Activated T-helper 2 cell treated with anti-CD3 and anti-CD28 coated beads, Interferon-gamma antibody, Interleukin-2, Interleukin-4, amounts not matched to agents 10 μg/mL and 5 μg/mL and 100 μg/mL, durations not matched to agents 14 hours and 24 hours and 36 hours (primary cell): ENCODE measurements at regions of chr12 and their contacts with region 1.

Region 1: DNA sequence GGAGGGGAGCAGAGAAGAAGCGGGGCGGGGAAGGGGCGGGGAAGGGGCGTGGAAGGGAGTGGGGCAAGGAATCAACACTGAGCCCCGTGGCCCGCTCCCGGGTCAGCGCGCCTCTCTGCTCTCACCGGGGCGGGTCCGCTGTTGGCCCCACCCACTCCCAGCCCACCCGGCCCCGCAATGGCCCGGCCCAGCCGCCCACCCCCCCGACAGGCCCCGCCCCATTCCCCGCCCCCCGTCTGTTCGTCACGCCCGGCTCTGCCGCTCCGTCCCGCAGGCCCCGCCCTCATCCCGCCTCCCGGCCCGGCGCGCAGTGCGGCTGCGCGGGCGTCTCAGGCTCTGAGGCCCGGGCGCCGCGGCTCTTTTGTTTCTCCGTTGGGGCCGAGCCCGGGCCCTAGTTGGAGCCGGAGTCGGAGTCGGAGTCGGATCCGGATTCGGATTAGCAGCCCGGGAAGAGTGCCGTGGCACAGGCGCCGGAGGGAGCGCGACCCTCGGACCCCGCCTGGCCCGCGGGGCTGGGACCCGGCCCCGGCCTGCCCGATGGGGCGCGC is at the start of gene ULK1:
- DNase-seq: peak; percentile 88
- H3K4me3 Mint-ChIP-seq: peak within 1 kb of the TSS; percentile 81
- H3K27ac Mint-ChIP-seq: peak within 1 kb of the TSS; percentile 72
- H3K4me1 Mint-ChIP-seq: peaks cover 6% of the 10 kb centered on the region
- H3K27me3 Mint-ChIP-seq: peaks cover 3% of the 10 kb centered on the region
- total RNA-seq, gene ULK1: 28.0 and 30.2 TPM in 2 replicates

Region 2: GRCh38 chr12:131684015-131684725 is 210.2 kb before region 1 on chr12:
- intact Hi-C with region 1: loop called (anchors 1 kb)
- DNase-seq: no peak
- H3K4me3 Mint-ChIP-seq: no peak overlapping the region
- H3K27ac Mint-ChIP-seq: no peak overlapping the region
- H3K4me1 Mint-ChIP-seq: peaks cover 16% of the 10 kb centered on the region
- H3K27me3 Mint-ChIP-seq: no peaks in the 10 kb centered on the region

Region 3: DNA sequence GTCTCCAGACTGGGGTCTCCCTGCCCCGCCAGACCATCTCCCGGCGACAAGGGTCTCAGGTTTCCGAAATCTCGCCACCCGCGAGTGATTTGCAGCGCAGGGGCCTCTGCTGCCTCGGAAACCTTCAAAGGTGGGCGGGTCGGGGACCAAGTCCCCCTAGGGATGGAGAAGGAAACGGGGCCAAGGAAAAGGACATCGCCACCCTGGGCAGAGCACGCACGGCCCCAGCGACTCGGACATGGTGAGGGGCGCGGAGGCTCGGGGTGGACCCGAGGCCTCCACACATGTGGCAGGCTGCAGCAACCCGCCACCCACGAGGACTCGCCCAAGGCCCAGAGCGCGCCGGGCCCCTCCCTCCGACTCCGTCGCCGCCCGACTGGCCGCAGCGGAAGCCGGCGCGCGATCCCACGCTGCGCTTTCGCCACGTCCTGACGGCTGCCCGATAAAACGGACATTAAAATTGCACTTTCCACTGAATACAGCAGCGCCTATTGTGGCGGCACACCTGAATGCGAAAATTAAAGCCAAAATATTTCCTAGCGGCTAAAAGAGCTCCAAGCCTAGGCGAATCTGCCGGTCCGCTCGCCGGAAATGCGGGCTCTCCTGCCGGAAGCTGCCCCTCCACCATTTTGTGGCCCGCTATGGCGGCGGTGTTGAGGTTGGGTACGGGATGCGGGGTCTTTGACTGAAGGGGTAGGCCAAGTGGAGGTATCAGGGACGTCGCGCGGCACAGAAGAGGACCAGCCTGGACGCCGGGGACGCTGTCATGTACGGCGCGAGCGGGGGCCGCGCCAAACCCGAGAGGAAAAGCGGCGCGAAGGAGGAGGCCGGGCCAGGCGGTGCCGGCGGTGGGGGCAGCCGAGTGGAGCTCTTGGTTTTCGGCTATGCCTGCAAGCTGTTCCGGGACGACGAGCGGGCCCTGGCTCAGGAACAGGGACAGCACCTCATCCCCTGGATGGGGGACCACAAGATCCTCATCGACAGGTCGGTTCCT is 183.6 kb before region 1 on chr12 and contains the start of gene SFSWAP:
- intact Hi-C with region 1: loop called (anchors 10 kb)
- DNase-seq: peak; percentile 74
- H3K4me3 Mint-ChIP-seq: peak within 1 kb of the TSS; percentile 87
- H3K27ac Mint-ChIP-seq: peak within 1 kb of the TSS; percentile 86
- H3K4me1 Mint-ChIP-seq: peaks cover 24% of the 10 kb centered on the region
- H3K27me3 Mint-ChIP-seq: peaks cover 3% of the 10 kb centered on the region
- total RNA-seq, gene SFSWAP: 58.5 and 60.1 TPM in 2 replicates

Region 4: DNA sequence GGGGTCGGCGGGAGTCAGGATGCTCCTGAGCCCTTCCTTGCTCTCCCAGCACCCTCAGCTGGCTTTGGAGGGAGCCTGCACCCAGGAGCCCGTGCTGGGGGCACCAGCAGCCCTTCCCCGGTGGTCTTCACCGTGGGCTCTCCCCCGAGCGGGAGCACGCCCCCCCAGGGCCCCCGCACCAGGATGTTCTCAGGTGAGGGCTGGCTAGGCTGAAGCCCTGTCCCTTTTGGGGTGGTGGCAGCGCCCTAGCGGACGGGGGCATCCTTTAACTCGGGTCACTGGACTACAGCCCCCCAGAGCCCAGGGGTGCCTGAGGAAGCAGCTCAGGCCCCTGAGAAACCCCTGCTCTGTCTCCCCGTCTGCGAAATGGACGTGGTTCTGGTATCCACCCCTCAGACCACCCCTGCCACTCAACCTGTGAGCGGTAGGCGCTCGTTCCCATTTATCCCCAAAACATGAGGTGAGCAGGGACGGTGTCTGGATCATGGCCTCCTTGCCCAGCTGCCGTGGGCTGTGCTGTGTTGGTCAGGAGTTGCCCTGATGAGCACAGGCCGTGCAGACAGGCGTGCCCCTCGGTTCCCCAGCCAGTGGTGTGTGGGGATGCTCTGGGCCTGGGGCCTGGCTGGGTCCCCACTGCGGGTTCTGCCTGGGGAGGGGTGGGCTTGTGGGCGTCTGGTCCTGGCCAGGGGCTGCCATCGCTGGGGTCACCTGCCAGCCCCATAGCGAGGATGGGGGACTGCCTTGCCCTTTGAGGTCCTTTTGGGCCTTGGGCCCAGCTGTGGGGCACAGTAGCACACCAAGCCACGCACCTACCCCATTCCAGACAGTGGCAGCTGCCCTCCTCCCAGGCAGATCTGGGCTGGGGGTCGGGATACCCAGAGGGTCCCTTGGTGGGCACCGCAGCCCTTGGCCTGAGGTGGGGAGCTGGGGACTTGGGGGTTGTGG is 23.2 kb after region 1 on chr12:
- intact Hi-C with region 1: no loop called
- DNase-seq: no peak
- H3K4me3 Mint-ChIP-seq: no peak overlapping the region
- H3K27ac Mint-ChIP-seq: no peak overlapping the region
- H3K4me1 Mint-ChIP-seq: no peaks in the 10 kb centered on the region
- H3K27me3 Mint-ChIP-seq: no peaks in the 10 kb centered on the region

Region 5: DNA sequence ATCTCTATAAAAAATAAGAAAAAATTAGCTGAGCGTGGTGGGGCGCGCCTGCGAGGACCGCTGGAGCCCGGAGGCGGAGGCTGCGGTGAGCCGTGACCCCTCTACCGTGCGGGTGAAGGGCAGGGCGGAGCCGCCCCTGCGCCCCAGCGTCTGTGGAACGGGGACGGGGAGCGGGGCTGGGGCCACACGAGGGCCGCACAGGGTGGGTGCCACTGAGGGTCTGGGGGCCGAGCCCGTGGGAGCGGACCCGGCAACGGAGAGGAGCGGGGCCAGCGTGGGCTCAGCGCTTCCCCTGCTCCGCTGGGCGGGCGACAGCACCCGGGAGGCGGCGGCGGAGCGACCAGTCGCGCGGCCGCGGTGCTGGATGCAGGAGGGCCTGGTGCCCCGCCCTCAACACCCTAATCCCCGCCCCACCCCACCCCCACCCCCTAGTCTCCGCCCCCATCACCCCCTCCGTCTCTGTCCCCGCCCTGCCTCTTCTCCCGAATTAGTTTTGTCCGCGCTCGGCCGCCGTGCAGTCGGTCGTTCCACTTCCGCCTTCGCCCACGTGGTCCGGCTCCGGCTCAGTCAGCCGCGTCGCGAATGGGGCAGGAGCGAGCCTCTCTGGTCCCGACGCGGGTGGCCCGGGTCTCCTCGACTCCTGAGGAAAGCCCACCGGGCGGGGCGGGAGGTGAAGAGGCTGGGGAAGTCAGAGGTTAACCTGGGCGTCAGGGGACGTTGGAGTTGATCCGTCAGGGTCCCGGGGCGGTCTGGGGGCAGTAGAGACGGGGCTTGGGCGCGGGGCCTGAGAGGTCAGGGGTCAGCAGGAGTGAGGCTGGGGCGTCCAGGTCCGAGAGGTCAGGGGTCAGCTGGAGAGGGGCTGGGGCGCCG is 34.6 kb after region 1 on chr12 and contains the start of gene PUS1:
- intact Hi-C with region 1: loop called (anchors 1 kb)
- DNase-seq: peak; percentile 92
- H3K4me3 Mint-ChIP-seq: peak within 1 kb of the TSS; percentile 98
- H3K27ac Mint-ChIP-seq: peak within 1 kb of the TSS; percentile 92
- H3K4me1 Mint-ChIP-seq: peaks cover 17% of the 10 kb centered on the region
- H3K27me3 Mint-ChIP-seq: no peaks in the 10 kb centered on the region
- total RNA-seq, gene PUS1: 71.2 and 79.2 TPM in 2 replicates

Region 6: GRCh38 chr12:131949431-131950181 is 55.2 kb after region 1 on chr12 and contains the start of gene EP400:
- intact Hi-C with region 1: loop called (anchors 1 kb)
- DNase-seq: peak; percentile 89
- H3K4me3 Mint-ChIP-seq: peak within 1 kb of the TSS; percentile 89
- H3K27ac Mint-ChIP-seq: peak within 1 kb of the TSS; percentile 85
- H3K4me1 Mint-ChIP-seq: peaks cover 23% of the 10 kb centered on the region
- H3K27me3 Mint-ChIP-seq: no peaks in the 10 kb centered on the region
- total RNA-seq, gene EP400: 57.7 and 58.0 TPM in 2 replicates

Region 7: GRCh38 chr12:132046561-132046960 is 152.2 kb after region 1 on chr12:
- intact Hi-C with region 1: no loop called
- DNase-seq: no peak
- H3K4me3 Mint-ChIP-seq: no peak overlapping the region
- H3K27ac Mint-ChIP-seq: no peak overlapping the region
- H3K4me1 Mint-ChIP-seq: peaks cover under 1% of the 10 kb centered on the region
- H3K27me3 Mint-ChIP-seq: no peaks in the 10 kb centered on the region